ENCODE measurements at regions of chr21 and their contacts with region 1.

Region 1: DNA sequence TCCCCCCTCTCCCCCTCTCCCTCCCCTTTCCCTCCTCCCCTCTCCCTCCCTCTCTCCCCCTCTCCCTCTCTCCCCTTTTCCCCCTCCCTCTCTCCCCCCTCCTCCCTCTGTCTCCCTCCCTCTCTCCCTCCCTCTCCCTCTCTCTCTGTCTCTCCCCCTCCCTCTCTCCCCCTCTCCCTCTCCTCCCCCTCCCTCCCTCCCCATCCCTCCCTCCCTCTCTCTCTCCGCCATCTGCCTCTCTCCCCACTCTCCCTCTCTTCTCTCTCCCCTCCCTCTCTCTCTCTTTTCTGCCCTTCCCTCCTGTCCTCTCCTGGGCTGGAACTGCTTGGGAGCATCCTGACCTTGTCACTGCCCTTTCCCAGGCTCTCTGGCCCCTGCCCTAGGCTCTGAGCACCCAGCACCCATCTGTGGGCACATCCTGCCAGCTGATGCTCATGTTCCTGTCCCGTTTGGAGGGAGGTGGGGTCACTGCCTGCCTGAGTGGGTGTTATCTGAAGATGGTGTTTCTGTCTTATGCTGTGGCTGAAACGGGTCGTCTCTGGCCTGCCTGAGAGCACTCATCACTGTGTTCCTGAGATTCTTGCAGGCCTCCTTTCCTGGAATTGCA is 10.8 kb downstream of the FTCD start:
- DNase-seq: no peak
- H3K4me3 ChIP-seq: no peak overlapping the region
- H3K27ac ChIP-seq: no peak overlapping the region
- H3K4me1 ChIP-seq: peaks cover 3% of the 10 kb centered on the region
- H3K27me3 ChIP-seq: peaks cover 0 to 4% of the 10 kb centered on the region in 2 experiments
- CTCF ChIP-seq: no peak
- POLR2A ChIP-seq: no peak

Region 2: GRCh38 chr21:45973659-45974072 is 170.9 kb before region 1 on chr21:
- CTCF ChIA-PET with region 1: interaction called, 78 read pairs
- POLR2A ChIA-PET with region 1: no interaction called
- dilution Hi-C with region 1: no loop called
- intact Hi-C with region 1: loop called (anchors 1 kb)
- DNase-seq: peak; percentile 77
- H3K4me3 ChIP-seq: peak overlapping the region in 2 of 3 experiments; percentile 34 to 56
- H3K27ac ChIP-seq: peak overlapping the region; percentile 35
- H3K4me1 ChIP-seq: peaks cover 29% of the 10 kb centered on the region
- H3K27me3 ChIP-seq: peaks cover 0 to 2% of the 10 kb centered on the region in 2 experiments
- CTCF ChIP-seq: peak; percentile 70 to 83
- POLR2A ChIP-seq: no peak

Region 3: GRCh38 chr21:46097336-46098293 is 47.0 kb before region 1 on chr21 and contains the start of gene COL6A2:
- CTCF ChIA-PET with region 1: no interaction called
- POLR2A ChIA-PET with region 1: no interaction called
- dilution Hi-C with region 1: no loop called
- intact Hi-C with region 1: no loop called
- DNase-seq: no peak
- H3K4me3 ChIP-seq: peak within 1 kb of the TSS in 1 of 3 experiments; percentile 29
- H3K27ac ChIP-seq: no peak within 1 kb of the TSS
- H3K4me1 ChIP-seq: no peaks in the 10 kb centered on the region
- H3K27me3 ChIP-seq: peaks cover 23 to 33% of the 10 kb centered on the region in 2 experiments
- CTCF ChIP-seq: no peak
- POLR2A ChIP-seq: no peak
- total RNA-seq, gene COL6A2: 2.6 and 6.1 TPM in 2 replicates

Region 4: GRCh38 chr21:46159841-46160656 is 15.5 kb after region 1 on chr21:
- CTCF ChIA-PET with region 1: interaction called, 39 read pairs
- POLR2A ChIA-PET with region 1: no interaction called
- dilution Hi-C with region 1: no loop called
- intact Hi-C with region 1: no loop called
- DNase-seq: no peak
- H3K4me3 ChIP-seq: no peak overlapping the region
- H3K27ac ChIP-seq: no peak overlapping the region
- H3K4me1 ChIP-seq: no peaks in the 10 kb centered on the region
- H3K27me3 ChIP-seq: no peaks in the 10 kb centered on the region
- CTCF ChIP-seq: no peak
- POLR2A ChIP-seq: no peak

Region 5: GRCh38 chr21:46228345-46229051 is 83.9 kb after region 1 on chr21 and contains the start of gene LSS:
- CTCF ChIA-PET with region 1: interaction called, 12 read pairs
- POLR2A ChIA-PET with region 1: interaction called, 3 read pairs
- dilution Hi-C with region 1: no loop called
- intact Hi-C with region 1: loop called (anchors 5 kb)
- DNase-seq: peak; percentile 96
- H3K4me3 ChIP-seq: peak within 1 kb of the TSS; percentile 73 to 90 (median 81)
- H3K27ac ChIP-seq: peak within 1 kb of the TSS; percentile 1
- H3K4me1 ChIP-seq: peaks cover 22% of the 10 kb centered on the region
- H3K27me3 ChIP-seq: no peaks in the 10 kb centered on the region
- CTCF ChIP-seq: no peak
- POLR2A ChIP-seq: no peak
- total RNA-seq, gene LSS: 141 TPM in 2 replicates

Region 6: DNA sequence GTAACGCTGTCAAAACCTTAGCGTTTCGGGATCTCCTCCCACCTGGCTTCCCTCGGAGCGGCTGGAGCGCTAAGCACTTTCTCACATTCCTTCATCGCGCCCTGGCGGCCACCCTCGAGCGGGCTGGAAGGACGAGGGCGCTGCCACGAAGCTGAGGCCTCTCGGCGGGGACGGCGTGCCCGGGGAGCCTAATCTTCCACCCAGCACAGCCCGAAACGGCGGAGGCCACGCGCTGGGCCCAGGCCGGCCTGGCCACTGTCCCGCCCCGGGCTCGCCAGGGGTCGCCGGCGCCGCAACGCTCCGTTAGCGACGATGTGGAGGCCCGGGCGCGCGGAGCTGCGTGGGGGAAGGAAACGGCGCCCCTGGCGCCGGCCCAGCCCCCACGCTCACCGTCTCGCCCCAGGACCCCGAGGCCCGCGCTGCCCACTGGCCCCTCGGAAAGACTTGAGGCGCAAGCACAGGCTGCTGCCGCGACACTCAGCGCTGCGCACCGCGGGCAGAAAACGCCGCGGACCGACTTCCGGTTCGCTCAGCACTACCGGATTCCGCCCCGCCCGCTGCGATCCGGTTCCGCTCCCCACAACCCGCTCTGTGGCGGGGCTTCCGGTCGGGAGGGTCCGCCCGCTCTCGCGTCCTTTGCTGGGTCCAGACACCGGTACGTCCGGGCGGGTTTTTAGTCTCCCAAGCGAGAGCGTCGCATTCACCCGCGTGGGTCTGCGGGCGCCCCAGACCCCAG is 141.4 kb after region 1 on chr21 and contains the start of gene YBEY:
- CTCF ChIA-PET with region 1: interaction called, 12 read pairs
- POLR2A ChIA-PET with region 1: no interaction called
- dilution Hi-C with region 1: no loop called
- intact Hi-C with region 1: loop called (anchors 1 kb)
- DNase-seq: peak; percentile 88
- H3K4me3 ChIP-seq: peak within 1 kb of the TSS; percentile 53 to 90 (median 86)
- H3K27ac ChIP-seq: peak within 1 kb of the TSS; percentile 69
- H3K4me1 ChIP-seq: peaks cover 33% of the 10 kb centered on the region
- H3K27me3 ChIP-seq: no peaks in the 10 kb centered on the region
- CTCF ChIP-seq: peak; percentile 33 to 48
- POLR2A ChIP-seq: peak; percentile 94
- total RNA-seq, gene YBEY: 6.1 and 10.5 TPM in 2 replicates

Region 7: DNA sequence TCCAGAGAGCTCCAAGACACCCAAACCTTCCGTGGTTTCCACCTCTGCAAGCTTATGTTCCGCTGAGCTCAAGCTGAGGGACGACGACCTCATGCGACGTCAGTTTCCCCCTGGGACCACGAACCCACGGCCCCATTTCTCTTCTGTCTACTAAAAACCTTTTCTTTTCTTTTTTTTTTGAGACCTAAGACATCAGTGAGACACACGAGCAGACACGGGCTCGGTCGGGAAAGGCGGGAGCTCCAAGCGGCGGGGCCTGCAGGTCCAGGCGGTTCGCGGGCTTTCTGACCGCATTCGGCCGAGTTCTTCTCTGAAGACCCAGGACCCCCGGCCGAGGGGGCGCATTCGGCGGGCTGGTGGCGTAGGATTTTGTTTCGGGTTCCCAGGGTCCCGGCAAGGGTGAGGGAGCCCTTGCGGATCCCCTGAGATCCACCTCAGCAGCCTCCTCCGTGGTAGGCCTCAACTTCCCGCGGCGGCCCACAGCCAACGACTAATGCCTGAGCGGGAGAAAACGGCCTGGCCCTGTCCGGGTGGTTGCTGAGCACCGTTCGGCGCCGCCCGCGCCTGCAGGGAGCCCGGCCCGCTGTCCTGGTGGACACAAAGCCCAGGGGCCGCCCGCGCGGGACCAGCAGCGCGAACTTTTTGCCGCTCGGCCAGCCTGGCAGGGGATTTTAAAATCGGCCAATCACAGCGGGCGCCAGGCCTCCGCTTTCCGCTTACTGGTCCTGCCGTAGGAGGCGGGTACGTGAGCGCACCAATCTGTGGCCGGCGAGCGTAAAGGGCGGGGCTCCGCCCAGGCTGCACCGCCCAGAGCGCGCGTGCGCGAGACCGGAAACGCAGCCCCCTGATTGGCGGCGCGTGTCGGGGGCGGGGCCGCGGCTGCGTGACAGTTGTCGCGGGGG is 178.9 kb after region 1 on chr21 and contains the start of gene C21orf58:
- CTCF ChIA-PET with region 1: interaction called, 10 read pairs
- POLR2A ChIA-PET with region 1: no interaction called
- dilution Hi-C with region 1: no loop called
- intact Hi-C with region 1: loop called (anchors 5 kb)
- DNase-seq: peak; percentile 98
- H3K4me3 ChIP-seq: peak within 1 kb of the TSS; percentile 69 to 99 (median 86)
- H3K27ac ChIP-seq: peak within 1 kb of the TSS; percentile 84
- H3K4me1 ChIP-seq: peaks cover 29% of the 10 kb centered on the region
- H3K27me3 ChIP-seq: no peaks in the 10 kb centered on the region
- CTCF ChIP-seq: no peak
- POLR2A ChIP-seq: peak; percentile 84
- total RNA-seq, gene C21orf58: 19.3 and 24.3 TPM in 2 replicates

Region 8: DNA sequence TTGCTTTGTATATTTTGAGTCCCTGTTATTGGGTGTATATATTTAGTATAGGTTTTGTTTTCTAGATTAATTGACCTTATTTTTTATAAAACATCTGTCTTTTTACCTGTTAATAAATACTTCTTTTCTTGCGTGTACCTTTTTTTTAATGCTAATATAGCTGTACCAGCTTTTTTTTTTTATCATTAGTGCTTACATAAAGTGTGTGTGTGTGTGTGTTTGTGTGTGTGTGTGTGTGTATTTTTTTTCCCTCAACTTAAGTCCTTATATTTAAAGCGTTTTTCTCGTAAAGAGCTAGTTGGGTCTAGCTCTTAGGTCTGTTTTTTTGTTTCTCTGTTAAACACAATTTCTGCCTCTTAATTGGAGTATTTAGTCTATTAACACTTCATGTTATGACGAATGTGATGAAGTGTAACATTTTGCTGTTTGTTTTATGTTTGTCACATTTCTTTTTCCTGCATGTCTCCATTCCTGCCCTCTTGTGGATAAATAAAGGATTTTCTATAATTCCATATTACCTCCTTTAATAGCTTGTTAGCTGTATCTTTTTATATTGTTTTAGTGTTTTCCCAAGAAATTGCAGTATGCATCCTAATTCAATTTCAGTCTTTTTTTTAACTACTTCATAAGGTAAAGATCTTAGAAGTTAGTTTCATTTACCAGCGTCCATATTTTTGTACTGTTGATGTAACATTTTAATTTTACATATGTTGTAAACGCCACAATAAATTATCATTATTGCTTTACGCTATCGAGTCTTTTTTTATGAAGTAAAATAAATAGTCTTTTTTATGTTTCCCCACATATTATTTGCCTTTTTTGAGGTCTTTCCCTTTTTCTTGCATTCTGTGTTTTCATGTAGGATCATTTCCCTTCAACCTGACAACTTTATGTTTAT is 495.2 kb after region 1 on chr21:
- CTCF ChIA-PET with region 1: interaction called, 10 read pairs
- POLR2A ChIA-PET with region 1: no interaction called
- dilution Hi-C with region 1: no loop called
- intact Hi-C with region 1: no loop called
- DNase-seq: peak; percentile 62
- H3K4me3 ChIP-seq: no peak overlapping the region
- H3K27ac ChIP-seq: no peak overlapping the region
- H3K4me1 ChIP-seq: peaks cover 28% of the 10 kb centered on the region
- H3K27me3 ChIP-seq: no peaks in the 10 kb centered on the region
- CTCF ChIP-seq: peak; percentile 11 to 16
- POLR2A ChIP-seq: no peak